Endothelial cell of umbilical vein (primary cell): ENCODE measurements at regions of chr7 and their contacts with region 1.

Region 1: GRCh38 chr7:30800785-30801252 is 29.6 kb downstream of the MINDY4 start:
- DNase-seq: peak; percentile 80
- H3K4me3 ChIP-seq: no peak overlapping the region
- H3K27ac ChIP-seq: no peak overlapping the region
- H3K4me1 ChIP-seq: peaks cover 58% of the 10 kb centered on the region
- H3K27me3 ChIP-seq: no peaks in the 10 kb centered on the region
- CTCF ChIP-seq: peak; percentile 62 to 70
- POLR2A ChIP-seq: no peak

Region 2: DNA sequence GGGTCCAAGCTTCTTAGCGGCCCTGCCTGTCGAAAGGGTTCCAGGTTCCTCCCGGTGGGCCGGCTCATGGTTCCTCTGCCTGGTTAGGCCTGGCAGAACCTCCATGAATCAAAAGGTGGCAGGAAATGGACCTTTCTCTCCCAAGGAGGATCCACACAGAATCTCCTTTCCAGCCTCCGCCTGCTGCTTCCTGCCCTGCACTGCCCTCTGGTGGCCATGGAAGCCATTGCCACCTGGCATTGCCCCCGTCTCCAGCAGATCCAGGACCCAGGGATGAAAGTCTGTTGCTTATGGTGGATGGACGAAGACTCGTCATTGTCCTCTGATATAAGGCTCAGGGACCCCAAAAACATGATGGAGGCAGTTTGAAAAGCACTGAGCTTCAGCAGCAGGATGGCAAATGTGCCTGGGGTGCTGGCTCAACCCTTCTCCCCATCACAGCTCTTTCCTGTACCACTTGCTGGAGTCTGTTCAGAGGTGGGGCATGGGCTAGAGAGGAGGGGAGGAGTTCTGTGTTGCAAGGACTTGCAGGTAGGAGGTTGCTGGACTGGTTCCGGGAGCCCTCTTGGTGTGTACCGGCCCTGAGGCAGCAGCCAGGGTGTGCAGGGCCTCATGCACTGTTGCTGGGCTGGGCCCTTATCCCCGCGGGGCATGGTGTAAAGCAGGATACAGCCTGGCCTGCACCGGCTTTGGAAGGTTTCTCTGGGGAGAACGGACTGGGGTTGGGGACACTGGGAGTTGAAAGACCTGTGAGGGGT is 60.2 kb before region 1 on chr7:
- CTCF ChIA-PET with region 1: no interaction called
- POLR2A ChIA-PET with region 1: no interaction called
- dilution Hi-C with region 1: no loop called
- intact Hi-C with region 1: loop called (anchors 1 kb)
- DNase-seq: peak; percentile 58
- H3K4me3 ChIP-seq: no peak overlapping the region
- H3K27ac ChIP-seq: no peak overlapping the region
- H3K4me1 ChIP-seq: no peaks in the 10 kb centered on the region
- H3K27me3 ChIP-seq: peaks cover 3 to 4% of the 10 kb centered on the region in 2 experiments
- CTCF ChIP-seq: peak; percentile 94 to 98
- POLR2A ChIP-seq: no peak

Region 3: GRCh38 chr7:30869794-30870611 is 69.2 kb after region 1 on chr7:
- CTCF ChIA-PET with region 1: interaction called, 9 read pairs
- POLR2A ChIA-PET with region 1: no interaction called
- dilution Hi-C with region 1: no loop called
- intact Hi-C with region 1: loop called (anchors 1 kb)
- DNase-seq: peak; percentile 93
- H3K4me3 ChIP-seq: no peak overlapping the region
- H3K27ac ChIP-seq: peak overlapping the region; percentile 36
- H3K4me1 ChIP-seq: peaks cover 19% of the 10 kb centered on the region
- H3K27me3 ChIP-seq: no peaks in the 10 kb centered on the region
- CTCF ChIP-seq: peak in 1 of 2 donors; percentile 9
- POLR2A ChIP-seq: no peak

Region 4: DNA sequence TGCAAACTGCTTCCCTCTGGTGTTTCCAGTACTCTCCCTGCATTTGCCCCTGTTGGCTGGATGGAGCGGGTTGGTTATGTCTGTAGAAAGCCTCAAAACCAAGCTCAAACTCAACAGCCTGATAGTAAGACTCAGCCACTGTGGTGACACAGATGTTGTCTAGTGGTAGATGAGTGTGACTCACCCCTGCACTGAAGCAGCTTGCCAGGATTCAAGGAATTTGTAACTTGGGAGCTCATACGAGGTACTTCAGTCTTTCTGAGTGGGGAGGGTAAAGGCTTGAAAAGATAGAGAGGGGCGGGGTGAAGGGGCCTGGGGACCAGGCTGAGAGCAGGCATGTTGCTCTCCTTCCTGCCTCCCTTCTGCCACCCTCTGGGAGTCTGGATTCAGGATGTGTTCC is 87.9 kb after region 1 on chr7:
- CTCF ChIA-PET with region 1: interaction called, 3 read pairs
- POLR2A ChIA-PET with region 1: no interaction called
- dilution Hi-C with region 1: no loop called
- intact Hi-C with region 1: loop called (anchors 1 kb)
- DNase-seq: peak; percentile 73
- H3K4me3 ChIP-seq: no peak overlapping the region
- H3K27ac ChIP-seq: no peak overlapping the region
- H3K4me1 ChIP-seq: peaks cover 10% of the 10 kb centered on the region
- H3K27me3 ChIP-seq: peaks cover 28% of the 10 kb centered on the region in 2 experiments
- CTCF ChIP-seq: no peak
- POLR2A ChIP-seq: no peak

Region 5: DNA sequence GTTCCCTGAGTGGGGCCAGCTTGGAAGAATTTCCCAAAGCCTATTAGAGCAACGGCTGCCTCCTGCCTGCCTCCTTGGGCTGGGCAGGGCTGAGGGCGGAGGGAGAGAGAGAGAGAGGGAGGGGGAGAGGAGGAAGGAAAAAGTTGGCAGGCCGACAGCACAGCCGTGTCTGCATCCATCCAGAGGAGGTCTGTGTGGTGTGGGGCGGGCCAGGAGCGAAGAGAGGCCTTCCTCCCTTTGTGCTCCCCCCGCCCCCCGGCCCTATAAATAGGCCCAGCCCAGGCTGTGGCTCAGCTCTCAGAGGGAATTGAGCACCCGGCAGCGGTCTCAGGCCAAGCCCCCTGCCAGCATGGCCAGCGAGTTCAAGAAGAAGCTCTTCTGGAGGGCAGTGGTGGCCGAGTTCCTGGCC is 110.7 kb after region 1 on chr7 and contains the start of gene AQP1:
- CTCF ChIA-PET with region 1: interaction called, 9 read pairs
- POLR2A ChIA-PET with region 1: no interaction called
- dilution Hi-C with region 1: no loop called
- intact Hi-C with region 1: loop called (anchors 1 kb)
- DNase-seq: peak; percentile 72
- H3K4me3 ChIP-seq: peak within 1 kb of the TSS in 1 of 3 experiments; percentile 39
- H3K27ac ChIP-seq: no peak within 1 kb of the TSS
- H3K4me1 ChIP-seq: peaks cover 9% of the 10 kb centered on the region
- H3K27me3 ChIP-seq: no peaks in the 10 kb centered on the region
- CTCF ChIP-seq: no peak
- POLR2A ChIP-seq: no peak
- total RNA-seq, gene AQP1: 11.6 and 15.9 TPM in 2 replicates

Region 6: GRCh38 chr7:30974605-30975255 is 173.9 kb after region 1 on chr7:
- CTCF ChIA-PET with region 1: interaction called, 10 read pairs
- POLR2A ChIA-PET with region 1: no interaction called
- dilution Hi-C with region 1: no loop called
- intact Hi-C with region 1: loop called (anchors 1 kb)
- DNase-seq: peak; percentile 62
- H3K4me3 ChIP-seq: no peak overlapping the region
- H3K27ac ChIP-seq: no peak overlapping the region
- H3K4me1 ChIP-seq: no peaks in the 10 kb centered on the region
- H3K27me3 ChIP-seq: peaks cover 22 to 29% of the 10 kb centered on the region in 2 experiments
- CTCF ChIP-seq: peak; percentile 61 to 81
- POLR2A ChIP-seq: no peak

Region 7: DNA sequence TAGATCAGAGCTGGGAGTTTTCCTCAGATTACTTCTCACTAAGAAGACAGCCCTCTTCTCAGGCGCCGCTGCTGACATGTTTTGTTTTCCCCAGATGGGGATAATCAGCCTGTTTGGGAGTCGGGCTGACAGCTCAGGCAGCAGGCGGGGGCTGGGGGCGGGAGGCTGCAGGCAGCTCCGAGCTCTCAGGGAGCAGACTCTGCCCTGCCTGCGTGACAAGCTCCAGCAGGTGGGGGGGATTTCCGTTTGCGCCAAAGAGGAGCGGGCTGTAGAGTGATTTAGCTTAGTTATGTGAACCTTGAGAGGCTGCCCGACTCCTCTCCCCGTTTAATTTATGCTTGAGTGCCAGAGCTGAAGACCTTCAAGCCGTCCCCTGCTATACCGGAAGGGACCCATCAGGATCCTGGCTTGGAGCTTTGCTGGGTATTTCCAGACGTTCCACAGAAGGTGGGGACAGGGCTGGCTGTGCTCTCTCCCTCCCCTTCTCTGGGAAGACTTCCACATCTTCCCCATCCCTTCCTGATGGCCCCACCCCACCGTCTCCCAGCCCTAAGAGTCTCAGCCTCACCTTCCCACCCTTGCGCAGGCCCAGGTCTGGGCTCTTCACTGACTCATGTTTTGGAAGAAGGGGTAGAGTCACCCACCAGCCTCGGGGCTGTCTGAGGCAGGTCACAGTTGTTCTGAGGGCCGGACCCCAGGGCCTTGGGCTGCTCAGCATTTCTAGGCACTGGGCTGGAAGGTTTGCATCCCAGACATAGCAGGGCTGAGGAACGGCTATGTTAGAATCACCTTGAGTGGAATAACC is 226.5 kb after region 1 on chr7:
- CTCF ChIA-PET with region 1: no interaction called
- POLR2A ChIA-PET with region 1: no interaction called
- dilution Hi-C with region 1: no loop called
- intact Hi-C with region 1: no loop called
- DNase-seq: no peak
- H3K4me3 ChIP-seq: no peak overlapping the region
- H3K27ac ChIP-seq: no peak overlapping the region
- H3K4me1 ChIP-seq: no peaks in the 10 kb centered on the region
- H3K27me3 ChIP-seq: peaks cover 0 to 5% of the 10 kb centered on the region in 2 experiments
- CTCF ChIP-seq: no peak
- POLR2A ChIP-seq: no peak

Region 8: DNA sequence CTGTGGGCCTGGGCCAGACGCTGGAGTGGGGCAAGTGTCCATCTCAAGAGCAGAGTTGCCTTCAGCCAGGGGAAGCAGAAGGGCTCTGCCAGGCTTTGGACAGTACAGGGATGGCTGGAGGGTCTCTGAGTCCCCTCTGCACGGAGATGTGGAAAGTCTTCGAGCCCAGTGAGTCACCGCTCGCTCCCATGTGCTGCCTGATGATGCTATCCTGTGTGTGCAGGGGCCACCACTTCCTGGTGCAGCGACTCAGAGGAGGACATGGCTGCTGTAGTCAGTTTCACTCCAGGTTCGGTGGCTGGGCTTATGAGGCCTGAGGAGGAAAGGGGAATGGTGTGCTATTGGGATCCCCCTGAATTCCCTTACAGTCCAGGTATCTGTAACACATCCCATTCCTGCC is 257.3 kb after region 1 on chr7:
- CTCF ChIA-PET with region 1: no interaction called
- POLR2A ChIA-PET with region 1: no interaction called
- dilution Hi-C with region 1: no loop called
- intact Hi-C with region 1: loop called (anchors 5 kb)
- DNase-seq: no peak
- H3K4me3 ChIP-seq: no peak overlapping the region
- H3K27ac ChIP-seq: no peak overlapping the region
- H3K4me1 ChIP-seq: no peaks in the 10 kb centered on the region
- H3K27me3 ChIP-seq: peaks cover 11 to 13% of the 10 kb centered on the region in 2 experiments
- CTCF ChIP-seq: no peak
- POLR2A ChIP-seq: no peak